ENCODE measurements at regions of chr16 and their contacts with region 1.

Region 1: DNA sequence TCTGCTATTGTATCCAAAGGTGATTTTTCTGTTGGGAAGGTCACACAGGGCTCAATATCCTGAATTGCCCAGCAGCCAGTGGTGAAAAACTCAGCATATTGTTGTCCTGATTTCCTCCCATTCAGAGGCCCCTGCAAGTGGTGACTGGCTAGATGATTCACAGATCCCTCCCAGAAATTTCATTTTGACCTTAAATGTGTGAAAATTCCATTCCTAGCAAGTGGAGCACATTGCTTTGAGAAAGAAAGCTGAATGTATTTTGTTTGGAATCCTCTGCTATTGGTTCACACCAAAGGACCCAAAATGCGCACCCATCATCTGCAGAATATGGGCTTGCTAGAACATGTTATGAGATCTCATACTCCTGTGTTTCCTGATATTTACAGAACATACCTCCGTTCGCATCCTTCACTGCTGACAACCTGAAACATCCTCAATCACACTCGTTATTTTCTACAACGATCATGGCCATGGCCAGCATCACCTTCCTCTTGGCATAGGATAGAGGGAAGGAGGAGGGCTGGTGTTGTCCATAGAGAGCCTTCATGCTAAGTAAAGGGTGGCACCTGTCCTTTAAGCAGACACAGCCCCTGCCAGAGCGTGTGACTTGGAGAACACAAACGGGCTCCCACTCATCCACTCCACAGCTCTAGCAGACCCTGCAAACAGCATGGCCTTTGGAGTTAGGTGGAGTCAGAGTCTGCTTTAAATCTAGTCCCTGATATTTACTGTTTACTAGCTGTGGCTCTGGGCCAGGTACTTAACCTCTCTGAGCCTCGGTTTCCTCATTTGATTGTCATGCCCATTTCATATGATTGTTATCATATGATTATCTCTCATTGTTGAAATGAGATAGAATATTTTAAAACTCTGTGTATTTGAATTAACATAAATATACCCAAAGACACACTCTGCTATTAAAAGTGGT is 30.4 kb upstream of the NFAT5 start:
- DNase-seq: no peak
- ATAC-seq: no peak
- H3K4me3 ChIP-seq: no peak overlapping the region
- H3K27ac ChIP-seq: no peak overlapping the region
- H3K4me1 ChIP-seq: peaks cover 54 to 70% of the 10 kb centered on the region in 2 experiments
- H3K27me3 ChIP-seq: no peaks in the 10 kb centered on the region
- CTCF ChIP-seq: no peak
- POLR2A ChIP-seq: no peak
- RAD21 ChIP-seq: no peak

Region 2: DNA sequence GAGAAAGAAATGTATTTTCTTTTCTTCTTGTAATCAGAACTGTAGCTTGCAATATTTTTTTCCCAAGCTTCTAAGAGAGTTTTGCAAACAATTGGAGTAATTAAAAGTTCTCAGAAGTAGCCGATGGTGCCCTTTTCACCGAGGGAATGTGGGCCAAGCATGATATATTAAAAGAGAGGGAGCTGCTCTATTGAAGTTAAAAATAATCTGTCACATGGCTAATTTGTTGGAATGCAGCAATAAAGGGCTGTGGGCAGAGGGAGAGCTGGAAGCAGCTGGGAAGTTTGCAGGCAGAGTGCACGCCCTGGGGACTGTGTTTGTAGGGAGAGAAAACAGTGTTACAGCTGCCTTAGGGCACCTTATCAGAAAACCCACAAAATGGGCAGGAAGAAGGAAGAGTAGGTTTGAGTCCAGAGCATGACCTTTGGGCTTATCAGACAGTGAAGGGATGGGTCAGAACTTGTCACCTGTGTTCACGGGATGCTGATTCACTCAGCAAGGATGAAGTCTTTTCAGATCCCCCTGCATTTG is 131.0 kb before region 1 on chr16:
- CTCF ChIA-PET with region 1: no interaction called
- POLR2A ChIA-PET with region 1: interaction called, 16 read pairs
- RAD21 ChIA-PET with region 1: no interaction called
- intact Hi-C with region 1: loop called (anchors 5 kb)
- DNase-seq: peak; percentile 95
- ATAC-seq: peak; percentile 72
- H3K4me3 ChIP-seq: peak overlapping the region in 1 of 2 experiments; percentile 28; a peak in 1 of 4 replicates
- H3K27ac ChIP-seq: peak overlapping the region; percentile 99
- H3K4me1 ChIP-seq: peaks cover 82 to 99% of the 10 kb centered on the region in 2 experiments
- H3K27me3 ChIP-seq: no peaks in the 10 kb centered on the region
- CTCF ChIP-seq: no peak
- POLR2A ChIP-seq: no peak
- RAD21 ChIP-seq: no peak

Region 3: DNA sequence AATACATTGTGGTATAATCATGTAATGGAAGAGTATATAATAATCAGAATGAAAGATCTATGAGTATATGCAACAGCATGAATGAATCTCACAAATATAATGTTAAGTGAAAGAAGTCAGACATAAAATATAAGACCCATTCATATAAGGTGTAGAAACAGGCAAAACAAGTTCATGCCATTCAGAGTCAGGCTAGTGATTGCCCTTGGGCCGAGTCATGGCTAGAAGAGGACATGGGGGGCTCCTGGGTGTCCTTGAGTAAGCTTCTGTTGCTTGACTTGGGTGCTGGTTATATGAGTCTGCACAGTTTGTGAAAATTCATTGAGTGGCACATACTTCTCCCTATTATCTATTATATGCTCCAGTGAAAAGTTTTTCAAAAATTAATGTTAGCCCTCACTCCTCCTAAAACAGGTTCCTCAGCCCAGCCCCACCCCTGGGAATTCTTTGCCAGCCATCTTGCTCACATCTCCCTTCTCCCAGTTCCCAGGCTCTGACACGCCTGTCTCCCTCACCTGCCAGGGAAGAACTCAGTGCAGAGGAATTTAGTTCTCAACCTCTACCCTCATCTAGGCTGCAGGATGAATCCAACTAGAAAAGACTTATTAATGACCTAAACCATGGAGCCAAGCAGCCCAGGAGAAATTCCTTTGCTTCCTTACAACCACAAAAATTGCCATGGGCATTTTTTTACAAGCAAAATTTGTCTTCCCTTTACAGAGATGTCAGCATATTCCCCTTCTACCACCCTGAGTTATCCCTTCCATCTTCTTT is 22.0 kb before region 1 on chr16:
- CTCF ChIA-PET with region 1: no interaction called
- POLR2A ChIA-PET with region 1: interaction called, 10 read pairs
- RAD21 ChIA-PET with region 1: no interaction called
- intact Hi-C with region 1: no loop called
- DNase-seq: no peak
- ATAC-seq: peak; percentile 50; the same call in 1 of the 2 replicates
- H3K4me3 ChIP-seq: no peak overlapping the region; a peak in 1 of 4 replicates
- H3K27ac ChIP-seq: peak overlapping the region; percentile 72
- H3K4me1 ChIP-seq: peaks cover 29 to 37% of the 10 kb centered on the region in 2 experiments
- H3K27me3 ChIP-seq: no peaks in the 10 kb centered on the region
- CTCF ChIP-seq: no peak
- POLR2A ChIP-seq: no peak
- RAD21 ChIP-seq: no peak

Region 4: GRCh38 chr16:69520800-69521602 is 14.4 kb before region 1 on chr16:
- CTCF ChIA-PET with region 1: no interaction called
- POLR2A ChIA-PET with region 1: interaction called, 14 read pairs
- RAD21 ChIA-PET with region 1: no interaction called
- intact Hi-C with region 1: no loop called
- DNase-seq: no peak
- ATAC-seq: no peak
- H3K4me3 ChIP-seq: no peak overlapping the region
- H3K27ac ChIP-seq: peak overlapping the region; percentile 16; the same call in 1 of the 2 replicates
- H3K4me1 ChIP-seq: peaks cover 15 to 29% of the 10 kb centered on the region in 2 experiments
- H3K27me3 ChIP-seq: no peaks in the 10 kb centered on the region
- CTCF ChIP-seq: no peak
- POLR2A ChIP-seq: no peak
- RAD21 ChIP-seq: no peak

Region 5: DNA sequence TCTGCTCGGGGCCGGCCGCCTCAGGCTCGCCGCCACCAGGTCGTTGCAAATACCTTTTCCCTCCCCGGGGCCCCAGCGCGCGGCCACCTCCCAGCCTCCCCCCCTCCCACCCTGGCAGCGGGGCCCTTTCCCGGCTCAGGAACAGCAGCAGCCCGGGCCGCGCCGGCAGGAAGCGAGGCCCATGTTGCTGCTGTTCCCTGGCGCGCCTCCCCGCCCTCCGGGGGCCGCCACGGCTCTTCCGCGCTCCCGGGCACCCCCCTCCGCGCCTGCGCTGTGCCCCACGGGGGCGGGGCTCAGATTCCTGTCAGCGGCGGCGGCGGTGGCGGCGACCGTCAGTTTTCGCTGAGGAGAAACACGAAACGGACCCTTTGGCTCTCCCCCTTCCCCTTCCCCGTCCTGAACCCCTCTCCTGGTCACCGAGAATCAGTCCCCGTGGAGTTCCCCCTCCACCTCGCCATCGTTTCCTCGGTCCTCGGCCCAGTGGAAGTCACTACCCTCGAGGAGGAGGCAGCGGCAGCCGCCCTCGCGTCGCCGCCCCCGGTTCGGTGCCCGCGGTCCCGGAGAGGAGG is 30.4 kb after region 1 on chr16 and contains the start of gene NFAT5:
- CTCF ChIA-PET with region 1: no interaction called
- POLR2A ChIA-PET with region 1: interaction called, 17 read pairs
- RAD21 ChIA-PET with region 1: no interaction called
- intact Hi-C with region 1: no loop called
- DNase-seq: peak; percentile 42
- ATAC-seq: peak; percentile 78
- H3K4me3 ChIP-seq: peak within 1 kb of the TSS; percentile 78 to 91
- H3K27ac ChIP-seq: peak within 1 kb of the TSS; percentile 99
- H3K4me1 ChIP-seq: peaks cover 42 to 44% of the 10 kb centered on the region in 2 experiments
- H3K27me3 ChIP-seq: no peaks in the 10 kb centered on the region
- CTCF ChIP-seq: no peak
- POLR2A ChIP-seq: peak; percentile 53
- RAD21 ChIP-seq: peak; percentile 36; the same call in 1 of the 2 replicates
- total RNA-seq, gene NFAT5: 67.4 TPM

Region 6: DNA sequence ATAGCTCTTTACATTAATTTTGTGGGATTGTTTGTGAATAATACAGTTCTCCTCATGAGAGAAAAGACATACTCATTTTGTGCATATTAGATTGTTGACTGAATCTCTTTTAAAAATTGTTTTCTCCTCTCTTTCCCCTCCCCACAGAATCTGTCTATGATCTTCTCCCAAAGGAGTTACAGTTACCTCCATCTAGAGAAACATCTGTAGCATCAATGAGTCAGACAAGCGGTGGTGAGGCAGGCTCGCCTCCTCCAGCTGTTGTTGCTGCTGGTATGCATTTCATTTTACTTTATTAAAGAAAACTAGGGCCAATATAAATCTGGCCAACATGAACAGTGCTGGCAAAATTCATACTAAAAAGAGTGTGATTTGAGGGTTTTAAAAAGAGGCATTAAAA is 90.9 kb after region 1 on chr16:
- CTCF ChIA-PET with region 1: no interaction called
- POLR2A ChIA-PET with region 1: no interaction called
- RAD21 ChIA-PET with region 1: no interaction called
- intact Hi-C with region 1: no loop called
- DNase-seq: no peak
- ATAC-seq: no peak
- H3K4me3 ChIP-seq: no peak overlapping the region
- H3K27ac ChIP-seq: no peak overlapping the region
- H3K4me1 ChIP-seq: peaks cover 0 to 9% of the 10 kb centered on the region in 2 experiments; a peak in 1 of 4 replicates
- H3K27me3 ChIP-seq: no peaks in the 10 kb centered on the region
- CTCF ChIP-seq: no peak
- POLR2A ChIP-seq: no peak
- RAD21 ChIP-seq: no peak